ENCODE measurements at regions of chr22 and their contacts with region 1.

Region 1: DNA sequence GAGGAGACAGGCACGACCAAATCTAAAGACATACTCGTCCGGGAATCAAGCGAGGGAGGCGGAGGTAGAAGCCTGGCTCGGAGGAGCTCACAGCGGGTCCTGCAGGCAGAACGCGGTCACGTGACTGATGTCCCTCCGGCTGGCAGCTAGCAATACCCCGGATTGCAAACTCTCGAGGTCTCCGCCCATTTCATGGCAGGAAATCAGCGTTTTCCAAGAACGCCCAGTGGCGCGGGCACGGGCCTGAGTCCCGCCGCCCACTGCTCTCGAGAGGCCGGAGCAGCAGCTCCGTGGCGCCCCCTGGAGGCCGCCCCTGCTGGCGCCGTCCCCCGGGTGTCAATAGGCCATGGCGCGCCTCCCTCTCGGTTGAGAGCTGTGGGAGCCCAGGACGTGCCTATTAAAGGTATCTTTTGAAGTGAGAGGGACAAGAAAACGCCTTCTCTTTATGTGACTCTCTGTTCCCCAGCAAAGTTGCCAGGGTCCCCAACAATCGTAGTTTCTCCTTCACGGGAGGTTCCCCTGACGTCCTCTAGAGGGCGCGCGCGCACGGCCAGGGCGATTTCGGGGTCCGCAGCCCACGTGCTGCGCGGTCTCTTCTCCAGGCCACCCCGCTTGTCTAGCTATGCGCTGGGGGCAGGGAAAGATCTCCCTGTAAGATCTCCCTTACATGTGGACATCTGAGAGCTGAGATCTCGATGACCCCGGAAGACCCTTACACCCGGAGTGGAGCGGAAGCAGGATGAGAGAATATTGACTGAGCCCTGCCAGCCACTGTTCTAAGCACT is 37.3 kb upstream of the RBFOX2 start:
- H3K4me3 ChIP-seq: peak overlapping the region; percentile 57
- H3K27ac ChIP-seq: peak overlapping the region; percentile 64
- H3K4me1 ChIP-seq: no peaks in the 10 kb centered on the region
- CTCF ChIP-seq: peak; percentile 100

Region 2: GRCh38 chr22:35350539-35351503 is 715.1 kb before region 1 on chr22:
- CTCF ChIA-PET with region 1: interaction called, 10 read pairs
- POLR2A ChIA-PET with region 1: no interaction called
- H3K4me3 ChIP-seq: peak overlapping the region; percentile 46
- H3K27ac ChIP-seq: peak overlapping the region; percentile 10; the same call in 1 of the 2 replicates
- H3K4me1 ChIP-seq: no peaks in the 10 kb centered on the region
- CTCF ChIP-seq: peak; percentile 97

Region 3: DNA sequence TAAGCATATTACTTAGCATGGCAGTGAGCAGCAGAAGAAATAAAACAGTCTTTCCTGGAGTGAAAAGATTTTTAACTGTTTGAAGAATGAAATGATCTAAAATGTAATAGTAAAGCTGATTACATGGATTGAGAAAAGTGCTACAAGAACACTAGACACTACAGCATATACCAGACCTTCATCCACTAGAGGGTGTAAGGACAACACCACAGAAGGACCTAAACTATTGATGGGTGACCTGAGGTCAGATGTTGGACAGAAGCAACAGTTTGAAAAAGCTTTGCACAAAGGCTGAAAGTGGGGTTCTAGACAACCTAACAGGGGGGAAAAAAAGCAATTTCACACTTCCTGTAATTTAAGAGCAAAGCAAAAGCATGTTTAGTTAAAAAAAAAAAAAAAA is 135.0 kb before region 1 on chr22:
- CTCF ChIA-PET with region 1: interaction called, 127 read pairs
- POLR2A ChIA-PET with region 1: interaction called, 3 read pairs
- H3K4me3 ChIP-seq: no peak overlapping the region
- H3K27ac ChIP-seq: no peak overlapping the region
- H3K4me1 ChIP-seq: no peaks in the 10 kb centered on the region; the same call in 1 of the 2 replicates
- CTCF ChIP-seq: peak; percentile 43

Region 4: GRCh38 chr22:35971456-35972119 is 94.4 kb before region 1 on chr22:
- CTCF ChIA-PET with region 1: interaction called, 34 read pairs
- POLR2A ChIA-PET with region 1: no interaction called
- H3K4me3 ChIP-seq: no peak overlapping the region
- H3K27ac ChIP-seq: peak overlapping the region; percentile 25; the same call in 1 of the 2 replicates
- H3K4me1 ChIP-seq: peaks cover 30% of the 10 kb centered on the region
- CTCF ChIP-seq: no peak

Region 5: GRCh38 chr22:36028646-36029405 is 37.1 kb before region 1 on chr22 and contains the start of gene RBFOX2:
- CTCF ChIA-PET with region 1: interaction called, 44 read pairs
- POLR2A ChIA-PET with region 1: interaction called, 27 read pairs
- H3K4me3 ChIP-seq: peak within 1 kb of the TSS; percentile 84
- H3K27ac ChIP-seq: peak within 1 kb of the TSS; percentile 77; the same call in 1 of the 2 replicates
- H3K4me1 ChIP-seq: peaks cover 9% of the 10 kb centered on the region
- CTCF ChIP-seq: no peak

Region 6: GRCh38 chr22:36086170-36086490 is 20.2 kb after region 1 on chr22:
- CTCF ChIA-PET with region 1: interaction called, 46 read pairs
- POLR2A ChIA-PET with region 1: no interaction called
- H3K4me3 ChIP-seq: no peak overlapping the region
- H3K27ac ChIP-seq: no peak overlapping the region
- H3K4me1 ChIP-seq: no peaks in the 10 kb centered on the region
- CTCF ChIP-seq: no peak

Region 7: DNA sequence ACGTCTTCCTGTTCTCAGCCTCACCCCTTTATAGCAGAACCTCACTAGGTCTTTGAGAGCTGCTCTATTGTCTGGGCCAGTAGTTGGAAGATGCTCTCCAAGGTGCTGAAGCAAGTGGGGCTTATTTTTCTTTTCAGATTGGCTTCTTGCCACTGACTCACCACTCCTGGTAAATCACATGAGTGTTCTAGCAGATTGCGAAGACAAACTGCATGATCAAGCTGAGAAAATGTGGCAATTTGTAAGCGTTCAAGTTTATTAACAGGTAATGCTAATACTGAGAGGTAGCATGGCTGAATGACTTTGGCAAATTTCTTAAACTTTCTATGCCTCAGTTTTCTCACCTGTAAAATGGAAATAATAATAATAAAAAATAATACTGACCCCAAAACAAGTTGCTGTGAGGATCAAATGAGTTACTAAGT is 578.4 kb after region 1 on chr22:
- CTCF ChIA-PET with region 1: no interaction called
- POLR2A ChIA-PET with region 1: no interaction called
- H3K4me3 ChIP-seq: no peak overlapping the region
- H3K27ac ChIP-seq: no peak overlapping the region
- H3K4me1 ChIP-seq: 0 out of 2 replicates have a peak, but pooled peaks cover 2% of the 10 kb centered on the region
- CTCF ChIP-seq: no peak